Naive thymus-derived CD4-positive, alpha-beta T cell (primary cell): ENCODE measurements at regions of chr20 and their contacts with region 1.

Region 1: DNA sequence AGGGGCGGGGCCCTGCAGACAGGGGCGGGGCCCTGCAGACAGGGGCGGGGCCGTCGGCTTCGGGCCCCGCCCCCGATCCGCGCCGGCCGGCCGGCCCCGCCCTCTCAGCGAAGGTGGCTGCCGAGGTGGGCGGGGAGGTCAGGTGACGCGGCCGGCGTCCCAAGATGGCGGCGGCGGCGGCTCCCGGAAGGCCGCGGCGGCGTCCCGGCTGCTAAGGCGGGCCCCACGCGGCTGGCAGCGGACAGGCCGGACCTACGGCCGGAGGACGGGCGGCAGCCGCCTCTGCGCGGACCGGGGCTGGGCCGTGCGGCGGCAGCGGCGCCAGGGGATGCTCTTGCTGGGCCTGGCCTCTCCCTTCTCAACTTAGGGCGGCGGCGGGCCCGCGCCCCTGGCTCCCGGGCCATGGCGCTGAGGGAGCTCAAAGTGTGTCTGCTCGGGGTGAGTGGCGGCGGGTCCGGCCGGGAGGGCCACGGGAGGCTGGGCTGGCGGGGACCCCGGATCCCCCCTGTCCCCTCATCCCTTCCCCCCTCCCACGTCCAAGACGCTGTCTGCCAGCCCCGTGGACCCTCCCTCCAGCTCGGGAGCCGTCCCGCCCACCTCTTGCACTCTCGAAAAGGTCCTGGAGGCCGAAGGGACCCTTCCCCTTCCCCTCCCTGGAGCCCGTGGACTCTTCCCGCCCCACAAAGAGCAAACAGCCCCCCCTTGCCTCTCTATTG is at the start of gene RAB22A:
- DNase-seq: peak; percentile 74 to 89 (median 84)
- ATAC-seq: peak; percentile 81
- H3K4me3 ChIP-seq: peak within 1 kb of the TSS; percentile 78
- H3K4me3 Mint-ChIP-seq: peak within 1 kb of the TSS; percentile 81 to 97 (median 92)
- H3K27ac ChIP-seq: peak within 1 kb of the TSS; percentile 99
- H3K27ac Mint-ChIP-seq: peak within 1 kb of the TSS; percentile 92 to 99 (median 97)
- H3K4me1 ChIP-seq: peaks cover 38 to 66% of the 10 kb centered on the region in 2 donors
- H3K4me1 Mint-ChIP-seq: peaks cover 23 to 84% (median 67%) of the 10 kb centered on the region in 7 donors
- H3K27me3 ChIP-seq: no peaks in the 10 kb centered on the region
- H3K27me3 Mint-ChIP-seq: no peaks in the 10 kb centered on the region
- total RNA-seq, gene RAB22A: 17.3 to 24.7 (median 17.8) TPM

Region 2: DNA sequence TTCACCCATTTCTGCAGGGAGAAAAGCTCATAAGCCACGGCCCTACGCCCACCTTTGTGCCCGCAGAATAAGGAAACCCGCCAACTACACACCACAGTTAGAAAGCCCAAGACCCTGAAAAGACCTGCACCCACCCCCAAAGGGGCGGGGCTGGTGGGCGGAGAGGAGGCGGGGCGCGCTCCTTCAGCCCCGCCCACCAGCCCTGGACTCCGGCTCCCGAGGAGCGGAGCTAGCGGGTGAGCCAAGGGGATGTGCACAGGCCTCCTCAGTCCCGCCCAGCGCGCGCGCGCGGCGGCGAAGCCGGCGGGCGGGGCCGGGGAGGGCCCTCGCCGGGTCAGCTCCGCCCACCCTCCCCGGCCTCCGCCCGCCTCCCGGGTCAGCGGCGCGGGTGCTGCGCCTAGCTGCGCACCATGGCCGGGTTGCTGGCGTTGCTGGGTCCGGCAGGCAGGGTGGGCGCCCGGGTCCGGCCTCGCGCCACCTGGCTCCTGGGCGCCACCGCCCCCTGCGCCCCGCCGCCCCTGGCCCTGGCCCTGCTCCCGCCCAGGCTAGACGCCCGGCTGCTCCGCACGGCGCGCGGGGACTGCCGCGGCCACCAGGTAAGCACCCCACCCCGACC is 1951.0 kb before region 1 on chr20 and contains the start of gene FAM210B:
- CTCF ChIA-PET with region 1: no interaction called
- POLR2A ChIA-PET with region 1: no interaction called
- intact Hi-C with region 1: loop called in 1 of 2 experiments (anchors 2 kb)
- DNase-seq: peak; percentile 63 to 82 (median 79)
- ATAC-seq: peak; percentile 99
- H3K4me3 ChIP-seq: peak within 1 kb of the TSS; percentile 72
- H3K4me3 Mint-ChIP-seq: peak within 1 kb of the TSS; percentile 88 to 96 (median 92)
- H3K27ac ChIP-seq: peak within 1 kb of the TSS; percentile 71
- H3K27ac Mint-ChIP-seq: peak within 1 kb of the TSS; percentile 54 to 91 (median 81)
- H3K4me1 ChIP-seq: peaks cover 0 to 14% of the 10 kb centered on the region in 2 donors
- H3K4me1 Mint-ChIP-seq: peaks cover 13 to 29% (median 22%) of the 10 kb centered on the region in 7 donors
- H3K27me3 ChIP-seq: no peaks in the 10 kb centered on the region
- H3K27me3 Mint-ChIP-seq: peaks cover 0 to 4% (median 0%) of the 10 kb centered on the region in 5 donors
- total RNA-seq, gene FAM210B: 8.1 to 31.8 (median 19.4) TPM

Region 3: GRCh38 chr20:57709931-57710799 is 599.6 kb before region 1 on chr20 and contains the start of gene PMEPA1:
- CTCF ChIA-PET with region 1: no interaction called
- POLR2A ChIA-PET with region 1: no interaction called
- intact Hi-C with region 1: loop called (anchors 2 to 5 kb)
- DNase-seq: peak; percentile 91 to 95 (median 93)
- ATAC-seq: peak; percentile 96
- H3K4me3 ChIP-seq: peak within 1 kb of the TSS; percentile 98
- H3K4me3 Mint-ChIP-seq: peak within 1 kb of the TSS; percentile 82 to 97 (median 94)
- H3K27ac ChIP-seq: peak within 1 kb of the TSS; percentile 88
- H3K27ac Mint-ChIP-seq: peak within 1 kb of the TSS; percentile 46 to 97 (median 95)
- H3K4me1 ChIP-seq: peaks cover 11 to 23% of the 10 kb centered on the region in 2 donors
- H3K4me1 Mint-ChIP-seq: peaks cover 15 to 55% (median 44%) of the 10 kb centered on the region in 7 donors
- H3K27me3 ChIP-seq: peaks cover 0 to 7% of the 10 kb centered on the region in 2 donors
- H3K27me3 Mint-ChIP-seq: peaks cover 0 to 51% (median 0%) of the 10 kb centered on the region in 5 donors
- total RNA-seq, gene PMEPA1: 0.44 to 10.0 (median 9.0) TPM

Region 4: DNA sequence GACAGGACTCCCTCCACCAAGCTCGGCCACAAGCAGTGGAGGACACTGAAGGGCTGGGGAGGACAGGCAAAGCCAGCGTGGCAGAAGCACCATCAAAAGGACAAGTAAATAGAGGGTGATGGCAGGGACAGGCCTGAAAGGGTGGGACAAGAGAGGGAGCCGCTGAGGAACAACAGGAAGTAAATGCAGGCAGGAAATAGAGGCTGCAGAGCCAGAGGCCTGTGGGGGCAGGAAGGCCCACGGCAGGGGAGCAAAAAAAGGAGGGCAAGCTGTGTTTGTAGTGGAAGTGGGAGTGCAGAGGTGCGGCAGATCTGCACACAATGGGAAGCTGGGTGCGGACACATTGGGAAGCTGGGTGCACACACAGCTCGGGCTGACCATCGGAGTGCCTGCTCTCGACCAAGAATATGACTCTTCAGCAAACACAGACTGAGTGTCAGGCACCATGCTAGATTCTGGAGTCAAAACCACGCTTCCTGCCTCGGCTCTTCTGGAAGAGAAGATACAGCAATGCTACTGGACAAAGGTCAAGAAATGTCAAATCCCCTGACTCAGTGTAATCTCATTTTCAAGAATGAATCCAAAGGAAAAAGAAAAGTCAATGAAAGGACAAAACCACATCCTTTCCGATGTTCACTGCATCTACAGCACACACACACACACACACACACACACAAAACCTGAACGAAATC is 40.7 kb before region 1 on chr20:
- CTCF ChIA-PET with region 1: interaction called, 3 read pairs
- POLR2A ChIA-PET with region 1: no interaction called
- intact Hi-C with region 1: loop called in 1 of 2 experiments (anchors 5 kb)
- DNase-seq: peak in 2 of 9 donors; percentile 1 to 9
- ATAC-seq: no peak
- H3K4me3 ChIP-seq: no peak overlapping the region
- H3K4me3 Mint-ChIP-seq: peak overlapping the region in 9 of 10 donors; percentile 48 to 70 (median 58)
- H3K27ac ChIP-seq: no peak overlapping the region
- H3K27ac Mint-ChIP-seq: peak overlapping the region; percentile 6 to 79 (median 60)
- H3K4me1 ChIP-seq: peaks cover 7 to 8% of the 10 kb centered on the region in 2 donors
- H3K4me1 Mint-ChIP-seq: peaks cover 14 to 36% (median 32%) of the 10 kb centered on the region in 7 donors
- H3K27me3 ChIP-seq: no peaks in the 10 kb centered on the region
- H3K27me3 Mint-ChIP-seq: no peaks in the 10 kb centered on the region

Region 5: GRCh38 chr20:58555078-58555765 is 245.5 kb after region 1 on chr20:
- CTCF ChIA-PET with region 1: no interaction called
- POLR2A ChIA-PET with region 1: no interaction called
- intact Hi-C with region 1: no loop called
- DNase-seq: no peak
- ATAC-seq: no peak
- H3K4me3 ChIP-seq: no peak overlapping the region
- H3K4me3 Mint-ChIP-seq: no peak overlapping the region
- H3K27ac ChIP-seq: no peak overlapping the region
- H3K27ac Mint-ChIP-seq: no peak overlapping the region
- H3K4me1 ChIP-seq: no peaks in the 10 kb centered on the region
- H3K4me1 Mint-ChIP-seq: no peaks in the 10 kb centered on the region
- H3K27me3 ChIP-seq: no peaks in the 10 kb centered on the region
- H3K27me3 Mint-ChIP-seq: peaks cover 0 to 21% (median 12%) of the 10 kb centered on the region in 5 donors

Region 6: DNA sequence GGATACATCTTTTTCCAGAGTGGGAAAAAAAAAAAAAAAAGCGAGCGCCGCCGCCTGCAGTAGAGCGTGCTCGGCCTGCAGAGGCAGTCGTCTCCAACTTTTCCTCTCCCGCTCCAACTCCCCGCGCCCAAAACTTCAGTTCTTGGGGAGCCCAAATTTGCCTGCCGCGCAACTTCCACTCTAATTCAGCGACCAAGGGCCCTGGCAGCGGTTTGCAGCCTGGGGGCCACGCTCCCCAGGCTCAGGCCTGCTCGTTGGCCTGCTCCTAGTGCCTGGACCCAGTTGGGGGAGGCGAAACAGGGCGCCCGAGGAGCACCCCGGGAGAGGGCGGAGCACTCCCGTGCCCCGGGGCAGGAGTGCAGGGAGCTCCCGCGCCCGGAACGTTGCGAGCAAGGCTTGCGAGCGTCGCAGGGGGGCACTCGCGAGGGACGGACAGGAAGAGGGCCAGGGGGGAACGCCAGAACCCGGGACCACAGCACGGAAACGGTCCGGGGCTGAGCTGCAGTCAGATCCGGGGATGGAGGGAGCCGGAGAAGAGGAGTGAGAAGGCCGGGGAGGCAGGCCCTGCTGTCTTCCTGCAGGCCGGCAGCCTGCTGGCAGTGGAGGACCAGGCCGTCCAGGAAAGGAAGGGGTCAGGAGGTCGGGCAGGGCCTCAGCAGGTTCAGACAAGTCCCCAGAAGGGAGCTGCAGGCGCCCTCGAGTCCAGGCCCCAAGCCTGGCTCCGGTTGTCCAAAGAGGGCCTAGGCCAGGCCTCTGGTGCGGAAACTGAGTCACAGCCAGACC is 341.2 kb after region 1 on chr20 and contains the start of gene STX16:
- CTCF ChIA-PET with region 1: no interaction called
- POLR2A ChIA-PET with region 1: interaction called, 18 read pairs
- intact Hi-C with region 1: loop called (anchors 1 to 2 kb)
- DNase-seq: peak; percentile 76 to 87 (median 84)
- ATAC-seq: peak; percentile 83
- H3K4me3 ChIP-seq: peak within 1 kb of the TSS; percentile 94
- H3K4me3 Mint-ChIP-seq: peak within 1 kb of the TSS; percentile 94 to 100 (median 98)
- H3K27ac ChIP-seq: peak within 1 kb of the TSS; percentile 93
- H3K27ac Mint-ChIP-seq: peak within 1 kb of the TSS; percentile 97 to 100 (median 99)
- H3K4me1 ChIP-seq: peaks cover 24 to 32% of the 10 kb centered on the region in 2 donors
- H3K4me1 Mint-ChIP-seq: peaks cover 14 to 35% (median 28%) of the 10 kb centered on the region in 7 donors
- H3K27me3 ChIP-seq: no peaks in the 10 kb centered on the region
- H3K27me3 Mint-ChIP-seq: peaks cover 0 to 4% (median 0%) of the 10 kb centered on the region in 5 donors
- total RNA-seq, gene STX16: 173 to 225 (median 189) TPM

Region 7: GRCh38 chr20:59032023-59032712 is 722.4 kb after region 1 on chr20 and contains the start of gene ATP5F1E:
- CTCF ChIA-PET with region 1: no interaction called
- POLR2A ChIA-PET with region 1: interaction called, 5 read pairs
- intact Hi-C with region 1: loop called in 1 of 2 experiments (anchors 5 kb)
- DNase-seq: peak; percentile 94 to 98 (median 96)
- ATAC-seq: peak; percentile 98
- H3K4me3 ChIP-seq: peak within 1 kb of the TSS; percentile 62
- H3K4me3 Mint-ChIP-seq: peak within 1 kb of the TSS; percentile 87 to 96 (median 94)
- H3K27ac ChIP-seq: peak within 1 kb of the TSS; percentile 85
- H3K27ac Mint-ChIP-seq: peak within 1 kb of the TSS; percentile 86 to 98 (median 94)
- H3K4me1 ChIP-seq: peaks cover 40 to 44% of the 10 kb centered on the region in 2 donors
- H3K4me1 Mint-ChIP-seq: peaks cover 40 to 62% (median 56%) of the 10 kb centered on the region in 7 donors
- H3K27me3 ChIP-seq: no peaks in the 10 kb centered on the region
- H3K27me3 Mint-ChIP-seq: no peaks in the 10 kb centered on the region
- total RNA-seq, gene ATP5F1E: 57.0 to 81.7 (median 67.4) TPM